SK-N-SH (cell line): ENCODE measurements at regions of chr11 and their contacts with region 1.

Region 1: DNA sequence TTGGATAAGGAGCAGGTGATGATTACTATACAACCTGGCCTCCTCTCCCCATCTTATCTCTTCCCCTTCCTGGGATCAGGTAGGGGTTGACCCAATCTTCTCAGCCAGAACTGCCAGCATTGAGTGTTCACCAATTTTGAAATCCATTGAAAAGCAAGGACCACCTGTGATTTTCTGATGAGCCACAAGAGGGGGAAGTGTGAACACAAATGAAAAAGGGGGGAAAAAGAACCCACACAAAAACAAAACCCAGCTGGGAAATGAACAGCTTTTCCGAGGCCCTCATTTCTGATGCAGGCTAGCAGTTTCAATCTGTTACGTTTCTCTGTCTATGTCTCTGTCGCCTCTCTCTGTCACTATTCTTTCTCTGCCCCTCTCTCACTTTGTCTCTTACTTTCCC is 161.9 kb downstream of the INSC start:
- DNase-seq: peak; percentile 42
- H3K4me3 ChIP-seq: no peak overlapping the region
- H3K27ac ChIP-seq: no peak overlapping the region
- H3K4me1 ChIP-seq: no peaks in the 10 kb centered on the region; a peak in 2 of 4 replicates
- H3K27me3 ChIP-seq: no peaks in the 10 kb centered on the region
- CTCF ChIP-seq: peak; percentile 37; the same call in 1 of the 2 replicates
- EP300 ChIP-seq: no peak
- RAD21 ChIP-seq: peak; percentile 84

Region 2: GRCh38 chr11:15148169-15148568 is 128.5 kb before region 1 on chr11:
- CTCF ChIA-PET with region 1: no interaction called
- POLR2A ChIA-PET with region 1: no interaction called
- DNase-seq: no peak
- H3K4me3 ChIP-seq: no peak overlapping the region
- H3K27ac ChIP-seq: no peak overlapping the region
- H3K4me1 ChIP-seq: peaks cover 0 to 1% of the 10 kb centered on the region in 2 experiments; a peak in 1 of 4 replicates
- H3K27me3 ChIP-seq: no peaks in the 10 kb centered on the region
- CTCF ChIP-seq: no peak
- EP300 ChIP-seq: no peak
- RAD21 ChIP-seq: no peak

Region 3: DNA sequence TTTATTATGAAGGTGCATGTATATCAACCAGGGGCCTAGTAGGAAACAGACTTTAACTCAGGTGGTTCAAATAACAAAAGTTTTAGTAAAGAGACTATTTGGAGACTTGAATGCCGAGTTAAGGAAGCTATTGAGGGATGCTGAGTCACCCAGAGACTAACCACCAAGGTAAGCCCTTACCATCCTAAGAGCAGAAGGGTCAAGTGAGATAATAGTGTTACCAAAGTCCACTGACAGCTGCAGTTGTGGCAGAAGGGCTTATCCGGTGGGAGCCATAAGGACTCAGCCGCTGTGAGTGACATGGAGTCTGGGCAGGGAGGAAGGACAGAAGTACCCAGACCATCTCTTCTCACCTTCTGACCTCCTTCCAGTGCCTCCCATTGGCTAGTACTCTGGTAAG is 27.9 kb before region 1 on chr11:
- CTCF ChIA-PET with region 1: no interaction called
- POLR2A ChIA-PET with region 1: no interaction called
- DNase-seq: no peak
- H3K4me3 ChIP-seq: no peak overlapping the region
- H3K27ac ChIP-seq: no peak overlapping the region
- H3K4me1 ChIP-seq: no peaks in the 10 kb centered on the region
- H3K27me3 ChIP-seq: no peaks in the 10 kb centered on the region
- CTCF ChIP-seq: no peak
- EP300 ChIP-seq: no peak
- RAD21 ChIP-seq: no peak

Region 4: DNA sequence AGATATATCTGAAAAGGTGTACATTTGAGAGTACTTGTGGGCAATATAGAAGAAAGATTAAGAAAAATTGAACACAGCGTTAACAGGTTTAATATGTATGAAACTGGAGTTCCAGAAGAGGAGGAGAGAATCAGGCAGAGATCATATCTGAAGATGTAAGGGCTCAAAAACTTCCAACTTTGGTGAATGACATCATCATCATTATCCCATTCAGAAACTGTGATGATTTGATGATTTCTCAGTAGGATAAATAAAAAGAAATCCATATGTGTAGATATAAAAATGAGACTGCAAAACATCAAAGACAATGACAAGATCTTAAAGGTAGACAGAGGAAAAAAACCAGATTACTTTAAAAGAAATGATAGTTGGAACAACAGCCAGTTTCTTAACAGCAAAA is 13.5 kb before region 1 on chr11:
- CTCF ChIA-PET with region 1: interaction called, 10 read pairs
- POLR2A ChIA-PET with region 1: no interaction called
- DNase-seq: no peak
- H3K4me3 ChIP-seq: no peak overlapping the region
- H3K27ac ChIP-seq: no peak overlapping the region
- H3K4me1 ChIP-seq: no peaks in the 10 kb centered on the region; a peak in 1 of 4 replicates
- H3K27me3 ChIP-seq: no peaks in the 10 kb centered on the region
- CTCF ChIP-seq: no peak
- EP300 ChIP-seq: no peak
- RAD21 ChIP-seq: no peak

Region 5: GRCh38 chr11:15288863-15289262 is 12.2 kb after region 1 on chr11:
- CTCF ChIA-PET with region 1: interaction called, 34 read pairs
- POLR2A ChIA-PET with region 1: no interaction called
- DNase-seq: peak; percentile 22
- H3K4me3 ChIP-seq: no peak overlapping the region
- H3K27ac ChIP-seq: peak overlapping the region in 1 of 2 experiments; percentile 83; a peak in 2 of 4 replicates
- H3K4me1 ChIP-seq: peaks cover 0 to 14% of the 10 kb centered on the region in 2 experiments; a peak in 1 of 4 replicates
- H3K27me3 ChIP-seq: no peaks in the 10 kb centered on the region
- CTCF ChIP-seq: no peak
- EP300 ChIP-seq: peak in 1 of 2 experiments; percentile 47; a peak in 1 of 4 replicates
- RAD21 ChIP-seq: no peak

Region 6: DNA sequence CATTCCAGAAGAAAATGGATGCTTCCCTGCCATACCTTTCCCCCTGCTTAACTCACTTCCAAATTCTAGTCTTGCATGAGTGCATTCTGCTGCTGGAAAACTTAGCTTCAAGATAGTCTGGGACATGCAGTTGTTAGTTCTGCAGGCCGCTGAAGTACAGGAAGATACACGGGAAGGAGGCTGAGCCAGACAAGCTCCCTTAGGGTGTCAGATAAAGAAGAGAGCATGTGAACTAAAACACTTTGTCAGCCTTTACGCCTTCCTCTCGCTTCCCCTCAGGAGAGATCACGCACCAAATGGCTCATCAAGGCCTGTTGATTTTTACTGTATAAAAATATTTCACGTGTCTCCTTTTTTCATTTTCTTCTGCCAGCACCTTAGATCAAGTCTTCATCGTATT is 258.8 kb after region 1 on chr11:
- CTCF ChIA-PET with region 1: no interaction called
- POLR2A ChIA-PET with region 1: no interaction called
- DNase-seq: no peak
- H3K4me3 ChIP-seq: no peak overlapping the region
- H3K27ac ChIP-seq: no peak overlapping the region
- H3K4me1 ChIP-seq: peaks cover 0 to 2% of the 10 kb centered on the region in 2 experiments; a peak in 1 of 4 replicates
- H3K27me3 ChIP-seq: no peaks in the 10 kb centered on the region
- CTCF ChIP-seq: no peak
- EP300 ChIP-seq: no peak
- RAD21 ChIP-seq: no peak